ENCODE measurements at regions of chr10 and their contacts with region 1.

Region 1: GRCh38 chr10:119859420-119860258 is 13.0 kb downstream of the MCMBP start:
- DNase-seq: no peak
- H3K4me3 ChIP-seq: no peak overlapping the region
- H3K27ac ChIP-seq: no peak overlapping the region
- H3K27me3 ChIP-seq: no peaks in the 10 kb centered on the region
- CTCF ChIP-seq: peak; percentile 56

Region 2: DNA sequence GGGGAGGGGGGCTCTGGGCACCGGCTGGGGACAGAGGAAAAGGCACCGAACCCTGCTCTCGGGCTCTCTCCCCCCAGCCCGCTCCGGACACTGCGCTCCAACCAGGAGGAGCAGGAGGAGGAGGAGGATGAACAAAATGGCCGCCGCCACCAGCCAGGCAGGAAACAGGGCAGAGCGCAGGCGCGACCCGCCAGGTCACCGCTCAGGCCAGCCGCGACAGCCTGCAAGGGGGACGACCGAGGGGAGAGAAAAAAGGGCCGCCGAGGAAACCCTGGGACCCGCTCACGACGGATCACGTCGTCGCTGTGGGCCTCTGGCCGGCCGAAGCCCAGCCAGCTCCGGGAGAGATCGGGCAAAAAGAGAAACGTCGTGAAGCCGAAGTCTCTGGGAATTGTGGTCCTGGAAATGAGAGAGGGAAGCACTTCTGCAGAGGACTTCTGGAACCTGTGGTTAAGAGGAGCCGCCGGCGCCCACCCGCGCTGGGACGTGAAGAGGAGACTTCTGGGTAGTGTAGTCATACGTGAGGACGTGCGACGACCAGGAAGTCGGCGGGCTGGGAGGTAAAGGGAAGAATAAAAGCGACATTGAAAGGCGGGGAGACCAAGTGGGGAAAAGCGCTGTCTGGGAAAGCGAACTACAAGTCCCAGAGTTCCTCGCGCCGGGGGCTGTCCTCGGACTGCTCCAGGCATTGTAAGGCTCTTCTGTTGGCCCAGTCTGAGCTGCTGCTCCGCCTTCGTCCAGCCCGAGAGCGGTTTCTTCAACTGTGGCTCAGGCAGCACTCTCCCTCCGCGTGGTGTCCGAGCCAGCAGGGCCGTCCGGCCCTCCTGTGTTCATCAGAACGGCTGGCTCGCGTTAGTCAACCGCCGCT is 262.9 kb before region 1 on chr10 and contains the start of gene TIAL1:
- CTCF ChIA-PET with region 1: interaction called, 10 read pairs
- POLR2A ChIA-PET with region 1: no interaction called
- DNase-seq: peak; percentile 99
- H3K4me3 ChIP-seq: peak within 1 kb of the TSS; percentile 97
- H3K27ac ChIP-seq: peak within 1 kb of the TSS; percentile 99
- H3K27me3 ChIP-seq: no peaks in the 10 kb centered on the region
- CTCF ChIP-seq: no peak
- polyA plus RNA-seq, gene TIAL1: 86.0 and 113 TPM in 2 replicates

Region 3: GRCh38 chr10:119715628-119716505 is 143.8 kb before region 1 on chr10:
- CTCF ChIA-PET with region 1: interaction called, 17 read pairs
- POLR2A ChIA-PET with region 1: no interaction called
- DNase-seq: no peak
- H3K4me3 ChIP-seq: no peak overlapping the region
- H3K27ac ChIP-seq: no peak overlapping the region
- H3K27me3 ChIP-seq: no peaks in the 10 kb centered on the region
- CTCF ChIP-seq: no peak

Region 4: DNA sequence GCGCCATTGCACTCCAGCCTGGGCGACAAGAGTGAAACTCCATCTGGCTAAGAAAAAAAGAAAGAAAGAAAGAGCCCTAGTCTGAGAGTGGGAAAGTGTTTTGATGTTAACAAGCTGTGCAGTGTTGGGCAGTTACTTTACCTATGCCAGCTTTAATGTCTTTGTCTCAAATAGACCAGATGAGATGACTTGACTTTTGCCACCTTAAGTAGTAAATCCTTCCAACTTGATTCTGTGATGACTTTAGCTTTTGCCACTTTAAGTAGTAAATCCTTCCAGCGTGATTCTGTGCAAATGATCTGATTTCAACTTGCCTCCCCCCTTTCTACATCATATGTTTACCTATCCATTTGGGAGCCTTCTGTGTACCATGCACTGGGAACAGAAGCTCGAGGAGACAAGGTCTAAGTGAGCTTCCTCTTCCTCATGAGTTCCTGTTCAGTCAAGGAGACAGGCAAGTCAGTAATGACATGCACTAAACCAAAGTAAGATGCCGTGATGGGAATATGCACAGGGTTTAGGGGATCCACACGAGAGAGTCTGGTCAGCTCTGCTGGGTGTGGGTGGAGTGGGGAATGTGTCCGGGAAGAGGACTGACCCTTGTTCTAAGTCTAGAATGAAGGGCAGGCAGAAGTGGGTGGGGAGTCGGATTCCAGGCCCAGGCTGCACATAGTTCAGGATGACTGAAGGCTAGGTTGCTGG is 116.5 kb before region 1 on chr10:
- CTCF ChIA-PET with region 1: interaction called, 359 read pairs
- POLR2A ChIA-PET with region 1: no interaction called
- DNase-seq: no peak
- H3K4me3 ChIP-seq: no peak overlapping the region
- H3K27ac ChIP-seq: no peak overlapping the region
- H3K27me3 ChIP-seq: no peaks in the 10 kb centered on the region
- CTCF ChIP-seq: no peak

Region 5: DNA sequence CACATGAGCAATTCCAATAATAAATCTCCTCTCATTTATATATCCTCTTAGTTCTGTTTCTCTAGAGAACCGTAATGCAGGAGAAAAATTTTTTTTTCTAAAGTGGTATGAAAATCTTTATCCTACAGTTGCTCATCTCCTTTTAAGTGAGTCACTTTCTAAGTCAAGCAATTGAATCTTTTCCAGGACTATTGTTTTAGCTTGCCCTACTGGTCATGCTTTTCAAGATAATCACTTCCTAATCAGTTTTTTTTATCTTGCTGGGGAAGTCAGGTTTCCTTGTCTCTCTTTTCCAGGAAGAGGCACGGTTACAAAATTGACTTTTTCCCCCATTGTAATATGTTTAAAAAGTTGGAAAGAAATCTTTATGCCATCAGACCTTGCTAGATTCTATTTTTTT is 89.8 kb before region 1 on chr10:
- CTCF ChIA-PET with region 1: interaction called, 16 read pairs
- POLR2A ChIA-PET with region 1: no interaction called
- DNase-seq: no peak
- H3K4me3 ChIP-seq: no peak overlapping the region
- H3K27ac ChIP-seq: no peak overlapping the region
- H3K27me3 ChIP-seq: no peaks in the 10 kb centered on the region
- CTCF ChIP-seq: no peak

Region 6: GRCh38 chr10:119824299-119824698 is 35.3 kb before region 1 on chr10:
- CTCF ChIA-PET with region 1: no interaction called
- POLR2A ChIA-PET with region 1: no interaction called
- DNase-seq: no peak
- H3K4me3 ChIP-seq: no peak overlapping the region
- H3K27ac ChIP-seq: no peak overlapping the region
- H3K27me3 ChIP-seq: no peaks in the 10 kb centered on the region
- CTCF ChIP-seq: no peak

Region 7: DNA sequence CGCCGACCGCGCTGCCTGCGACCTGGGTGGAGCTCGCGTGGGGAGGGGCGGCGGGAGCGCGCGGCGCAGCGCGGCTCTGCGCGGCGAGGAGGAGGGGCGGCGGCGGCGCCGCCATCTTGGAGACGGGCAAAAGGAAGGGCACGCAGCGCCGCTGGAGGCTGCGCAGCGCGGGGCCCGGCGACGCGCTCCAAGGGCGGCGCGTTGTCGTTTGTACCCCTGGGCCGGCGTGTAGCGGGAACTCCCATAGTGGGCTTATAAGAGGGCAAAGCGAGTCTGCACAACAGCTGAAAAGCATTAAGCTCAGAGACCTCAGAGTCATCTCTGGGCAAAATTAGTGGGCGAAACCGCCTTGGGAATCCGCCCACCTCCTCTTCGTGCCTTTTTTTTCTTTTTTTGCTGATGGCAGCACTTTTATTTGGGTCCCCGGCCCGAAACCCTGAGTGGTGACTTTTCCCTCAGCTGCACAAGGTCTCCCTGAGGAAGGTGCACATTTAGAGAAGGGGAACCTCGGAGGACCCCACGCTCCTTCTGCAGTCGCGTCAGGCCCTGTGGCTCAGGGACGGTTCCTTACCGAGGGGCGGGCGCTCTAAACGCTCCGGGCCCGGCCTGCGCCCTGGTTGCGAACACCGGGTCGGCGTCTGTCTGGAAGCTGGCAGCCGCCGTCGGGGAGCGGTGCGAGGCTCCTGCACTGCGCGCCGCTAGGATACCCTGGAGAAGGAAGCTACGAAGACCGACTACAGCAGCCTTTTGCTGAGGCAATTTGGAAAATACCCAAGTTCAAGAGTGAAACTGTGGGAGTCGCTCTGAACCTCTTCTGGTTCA is 13.4 kb after region 1 on chr10:
- CTCF ChIA-PET with region 1: interaction called, 63 read pairs
- POLR2A ChIA-PET with region 1: no interaction called
- DNase-seq: peak; percentile 29
- H3K4me3 ChIP-seq: peak overlapping the region; percentile 74
- H3K27ac ChIP-seq: peak overlapping the region; percentile 66
- H3K27me3 ChIP-seq: no peaks in the 10 kb centered on the region
- CTCF ChIP-seq: no peak